ENCODE measurements at regions of chr2 and their contacts with region 1.

Region 1: DNA sequence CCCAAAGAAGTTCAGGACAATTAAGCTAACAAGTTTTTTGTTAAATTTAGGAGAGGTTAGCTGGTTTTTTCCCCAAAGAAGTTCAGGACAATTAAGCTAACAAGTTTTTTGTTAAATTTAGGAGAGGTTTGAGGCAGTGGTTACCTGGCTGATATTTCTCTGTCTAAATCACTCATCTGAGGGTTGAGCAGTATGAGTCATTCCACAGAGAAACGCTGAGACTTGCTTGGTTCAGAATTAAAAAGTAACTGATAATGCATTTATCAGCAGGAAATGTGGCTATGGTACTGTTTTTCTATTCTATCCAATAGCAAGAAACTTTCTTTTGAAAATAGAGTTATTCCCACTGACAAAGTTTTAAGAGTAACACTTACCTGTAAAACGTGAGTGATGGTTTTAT is 22.8 kb upstream of the KIDINS220 start:
- DNase-seq: no peak

Region 2: DNA sequence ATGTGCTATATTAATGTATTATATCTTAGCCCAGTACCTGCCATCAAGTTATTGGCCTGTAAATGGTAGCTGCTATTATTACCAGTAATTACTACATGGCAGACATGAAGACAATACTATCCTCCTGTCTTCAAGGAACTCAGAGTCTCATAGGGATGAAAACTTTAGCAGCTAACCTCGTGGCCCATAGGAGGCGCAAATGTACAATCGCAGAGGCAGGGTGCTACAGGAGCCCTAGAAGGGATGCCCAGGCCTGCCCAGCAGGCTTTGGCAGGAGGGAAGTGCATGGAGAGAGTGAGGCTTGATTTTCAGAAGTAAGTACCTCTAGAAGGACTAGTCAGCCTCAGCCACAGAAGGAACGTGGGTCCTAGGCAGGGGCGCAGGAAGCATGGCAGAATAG is 21.9 kb after region 1 on chr2:
- intact Hi-C with region 1: no loop called
- DNase-seq: peak in 2 of 10 donors; percentile 29 to 36

Region 3: DNA sequence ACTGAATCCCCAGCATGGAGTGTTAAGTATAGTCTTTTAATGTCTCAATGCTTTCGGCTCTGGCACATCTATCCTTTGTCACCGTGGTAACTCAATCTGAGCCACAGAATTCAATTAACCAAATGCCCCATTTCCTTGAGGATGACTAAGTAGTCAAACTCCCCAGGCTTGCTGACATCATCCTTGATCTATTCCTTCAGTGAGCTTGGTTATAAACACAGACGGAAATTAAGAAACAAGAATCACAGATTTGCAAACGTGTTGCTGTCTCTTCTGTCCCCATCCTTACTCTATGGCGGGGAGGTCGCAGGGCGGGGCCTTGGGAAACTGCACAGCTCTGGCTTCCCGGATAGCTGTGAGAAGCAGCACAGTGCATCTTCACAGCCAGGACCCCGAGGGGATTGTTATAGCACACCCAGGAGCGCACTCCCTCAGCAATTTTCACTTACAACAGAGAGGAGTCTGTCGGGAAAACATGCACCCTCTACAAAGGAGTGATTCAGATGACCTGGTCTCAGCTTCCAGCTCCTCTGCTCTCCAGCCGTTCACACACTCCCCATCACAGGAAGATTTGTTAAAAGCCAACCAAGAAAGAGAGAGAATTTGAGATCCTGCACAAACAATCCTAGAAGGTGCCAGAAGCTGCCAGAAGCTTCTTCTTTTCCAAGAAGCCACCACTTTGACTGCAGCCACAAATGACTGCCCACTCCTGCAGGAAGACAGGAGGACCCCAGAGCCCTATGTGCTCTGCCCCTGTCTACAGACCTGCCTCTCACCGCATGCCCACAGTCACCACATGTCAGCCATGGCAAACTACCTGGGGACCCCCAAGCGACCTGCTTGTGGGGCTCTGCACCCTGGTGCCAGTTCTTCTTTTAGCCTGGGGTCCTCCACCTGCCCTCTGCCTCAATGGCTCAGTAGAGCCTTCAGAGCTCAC is 815.4 kb after region 1 on chr2:
- intact Hi-C with region 1: loop called (anchors 10 kb)
- DNase-seq: peak in 1 of 10 donors; percentile 24

Measured in posterior cingulate gyrus (tissue), 11 donors.